ENCODE measurements at regions of chr22 and their contacts with region 1.

Region 1: GRCh38 chr22:23047742-23048141 is 22.6 kb upstream of the GNAZ start:
- DNase-seq: no peak
- H3K4me3 ChIP-seq: no peak overlapping the region
- H3K27ac ChIP-seq: peak overlapping the region in 1 of 2 donors; percentile 34
- H3K4me1 ChIP-seq: no peaks in the 10 kb centered on the region
- H3K27me3 ChIP-seq: no peaks in the 10 kb centered on the region
- CTCF ChIP-seq: no peak
- POLR2A ChIP-seq: no peak

Region 2: DNA sequence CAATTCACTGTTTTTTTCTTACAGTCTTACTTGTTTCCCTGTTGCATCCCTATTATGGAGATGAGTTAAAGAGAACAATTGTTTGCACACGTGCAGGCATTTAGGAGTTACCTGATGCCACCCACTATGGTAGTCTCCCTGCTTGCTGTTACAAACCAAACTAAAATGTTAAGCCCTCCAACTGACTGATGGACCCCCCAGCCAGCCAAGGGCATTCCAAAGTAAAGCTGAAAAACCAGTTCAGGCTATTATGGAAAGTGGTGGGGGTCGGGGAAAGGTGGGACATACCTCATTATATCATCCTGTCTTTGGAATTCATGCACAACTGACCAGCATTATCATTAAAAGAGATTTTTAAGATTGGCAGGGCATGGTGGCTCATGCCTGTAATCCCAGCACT is 24.4 kb before region 1 on chr22:
- intact Hi-C with region 1: loop called (anchors 2 kb)
- DNase-seq: no peak
- H3K4me3 ChIP-seq: no peak overlapping the region
- H3K27ac ChIP-seq: no peak overlapping the region
- H3K4me1 ChIP-seq: no peaks in the 10 kb centered on the region
- H3K27me3 ChIP-seq: no peaks in the 10 kb centered on the region
- CTCF ChIP-seq: no peak
- POLR2A ChIP-seq: no peak

Measured in breast epithelium (tissue), 4 donors.